CD8-positive, alpha-beta T cell (primary cell): ENCODE measurements at regions of chr10 and their contacts with region 1.

Region 1: GRCh38 chr10:43229208-43230061 is 37.4 kb downstream of the RASGEF1A start:
- DNase-seq: peak in 8 of 9 experiments; percentile 33 to 81 (median 56)
- ATAC-seq: peak; percentile 55
- H3K4me3 ChIP-seq: peak overlapping the region; percentile 45 to 54
- H3K4me3 Mint-ChIP-seq: peak overlapping the region; percentile 86
- H3K27ac ChIP-seq: peak overlapping the region in 1 of 2 experiments; percentile 21
- H3K27ac Mint-ChIP-seq: peak overlapping the region; percentile 81
- H3K4me1 ChIP-seq: peaks cover 37% of the 10 kb centered on the region
- H3K4me1 Mint-ChIP-seq: peaks cover 49% of the 10 kb centered on the region
- H3K27me3 ChIP-seq: no peaks in the 10 kb centered on the region
- H3K27me3 Mint-ChIP-seq: peaks cover 13% of the 10 kb centered on the region
- CTCF ChIP-seq: no peak

Region 2: DNA sequence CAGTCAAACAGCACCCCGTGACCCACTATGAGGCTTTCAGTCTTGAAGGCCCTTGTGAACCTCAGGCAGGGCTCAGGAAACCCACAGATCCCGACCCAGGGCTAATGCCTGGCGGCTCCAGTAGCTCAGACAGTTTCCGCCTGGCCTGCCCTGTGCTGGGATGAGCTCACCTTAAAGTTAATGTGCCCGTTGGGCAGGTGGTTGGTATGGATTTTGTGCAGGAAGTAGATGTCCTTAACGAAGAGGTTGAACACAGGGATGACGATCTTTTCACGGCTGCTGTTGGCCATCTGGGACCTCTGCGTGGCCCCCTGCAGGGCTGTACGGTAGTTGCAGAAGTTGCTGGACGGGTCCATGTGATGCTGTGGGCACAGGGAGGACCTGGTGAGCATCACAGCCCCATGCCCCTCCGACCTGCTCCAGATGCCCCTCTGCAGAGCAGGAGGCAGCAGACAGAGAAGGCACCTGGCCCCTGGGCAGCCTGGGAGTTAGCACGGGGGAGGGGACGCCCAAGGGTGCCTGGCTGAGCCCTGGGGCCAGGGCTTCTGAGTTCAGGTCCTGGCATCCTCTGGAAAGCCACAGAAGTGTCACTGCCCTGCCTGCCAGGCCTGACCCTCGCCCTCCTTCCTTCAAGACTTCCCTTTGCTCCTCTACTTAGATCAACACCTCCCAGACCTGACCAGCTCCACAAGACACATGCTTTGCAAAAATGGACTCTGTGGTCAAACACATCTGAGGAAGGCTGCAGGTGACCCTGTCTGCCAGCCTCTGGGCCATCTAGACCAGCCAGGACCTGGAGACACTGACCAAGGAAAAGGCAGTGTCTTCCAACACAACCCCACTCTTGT is 31.4 kb before region 1 on chr10:
- CTCF ChIA-PET with region 1: no interaction called
- POLR2A ChIA-PET with region 1: no interaction called
- intact Hi-C with region 1: no loop called
- DNase-seq: peak in 1 of 9 experiments; percentile 10
- ATAC-seq: no peak
- H3K4me3 ChIP-seq: no peak overlapping the region
- H3K4me3 Mint-ChIP-seq: no peak overlapping the region
- H3K27ac ChIP-seq: no peak overlapping the region
- H3K27ac Mint-ChIP-seq: no peak overlapping the region
- H3K4me1 ChIP-seq: no peaks in the 10 kb centered on the region
- H3K4me1 Mint-ChIP-seq: peaks cover 4% of the 10 kb centered on the region
- H3K27me3 ChIP-seq: no peaks in the 10 kb centered on the region
- H3K27me3 Mint-ChIP-seq: no peaks in the 10 kb centered on the region
- CTCF ChIP-seq: no peak

Region 3: GRCh38 chr10:43212043-43212721 is 17.3 kb before region 1 on chr10:
- CTCF ChIA-PET with region 1: no interaction called
- POLR2A ChIA-PET with region 1: no interaction called
- intact Hi-C with region 1: no loop called
- DNase-seq: no peak
- ATAC-seq: no peak
- H3K4me3 ChIP-seq: no peak overlapping the region
- H3K4me3 Mint-ChIP-seq: no peak overlapping the region
- H3K27ac ChIP-seq: no peak overlapping the region
- H3K27ac Mint-ChIP-seq: no peak overlapping the region
- H3K4me1 ChIP-seq: no peaks in the 10 kb centered on the region
- H3K4me1 Mint-ChIP-seq: no peaks in the 10 kb centered on the region
- H3K27me3 ChIP-seq: no peaks in the 10 kb centered on the region
- H3K27me3 Mint-ChIP-seq: no peaks in the 10 kb centered on the region
- CTCF ChIP-seq: no peak

Region 4: GRCh38 chr10:43244783-43245182 is 15.3 kb after region 1 on chr10:
- CTCF ChIA-PET with region 1: no interaction called
- POLR2A ChIA-PET with region 1: no interaction called
- intact Hi-C with region 1: loop called in 1 of 2 experiments (anchors 2 kb)
- DNase-seq: no peak
- ATAC-seq: no peak
- H3K4me3 ChIP-seq: no peak overlapping the region
- H3K4me3 Mint-ChIP-seq: no peak overlapping the region
- H3K27ac ChIP-seq: no peak overlapping the region
- H3K27ac Mint-ChIP-seq: no peak overlapping the region
- H3K4me1 ChIP-seq: no peaks in the 10 kb centered on the region
- H3K4me1 Mint-ChIP-seq: no peaks in the 10 kb centered on the region
- H3K27me3 ChIP-seq: no peaks in the 10 kb centered on the region
- H3K27me3 Mint-ChIP-seq: no peaks in the 10 kb centered on the region
- CTCF ChIP-seq: no peak